ENCODE measurements at regions of chr7 and their contacts with region 1.

Region 1: DNA sequence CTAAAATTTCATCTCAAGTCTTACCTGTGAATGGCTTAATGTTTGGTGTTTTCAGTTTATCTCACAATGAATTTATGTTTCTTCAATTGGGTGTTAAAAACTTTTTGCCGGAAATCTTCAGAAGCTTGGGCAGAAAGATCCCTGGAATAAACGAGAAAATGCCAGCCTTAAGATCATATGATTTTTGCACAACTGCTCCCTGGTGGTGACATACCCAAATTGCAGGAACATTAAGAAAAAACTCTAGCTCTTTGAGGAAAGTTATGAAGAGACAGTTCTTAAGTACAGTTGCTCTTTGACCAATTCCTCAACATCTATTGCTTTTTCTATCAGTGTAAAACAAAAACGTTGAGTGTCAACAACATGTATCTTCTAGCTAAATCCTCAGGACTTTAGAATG is 48.2 kb upstream of the CREB5 start:
- DNase-seq: no peak
- ATAC-seq: no peak
- H3K4me3 Mint-ChIP-seq: no peak overlapping the region
- H3K27ac Mint-ChIP-seq: no peak overlapping the region
- H3K4me1 Mint-ChIP-seq: peaks cover 14% of the 10 kb centered on the region
- H3K27me3 Mint-ChIP-seq: no peaks in the 10 kb centered on the region
- CTCF ChIP-seq: 0 out of 2 replicates have a peak, but pooled peaks have one; percentile 30

Region 2: GRCh38 chr7:28296571-28297483 is 67.3 kb before region 1 on chr7:
- CTCF ChIA-PET with region 1: interaction called, 13 read pairs
- POLR2A ChIA-PET with region 1: no interaction called
- DNase-seq: peak; percentile 71
- ATAC-seq: peak; percentile 55
- H3K4me3 Mint-ChIP-seq: no peak overlapping the region
- H3K27ac Mint-ChIP-seq: 0 out of 2 replicates have a peak overlapping the region, but pooled peaks have one; percentile 30
- H3K4me1 Mint-ChIP-seq: peaks cover 61% of the 10 kb centered on the region
- H3K27me3 Mint-ChIP-seq: no peaks in the 10 kb centered on the region
- CTCF ChIP-seq: peak; percentile 25; the same call in 1 of the 2 replicates

Region 3: DNA sequence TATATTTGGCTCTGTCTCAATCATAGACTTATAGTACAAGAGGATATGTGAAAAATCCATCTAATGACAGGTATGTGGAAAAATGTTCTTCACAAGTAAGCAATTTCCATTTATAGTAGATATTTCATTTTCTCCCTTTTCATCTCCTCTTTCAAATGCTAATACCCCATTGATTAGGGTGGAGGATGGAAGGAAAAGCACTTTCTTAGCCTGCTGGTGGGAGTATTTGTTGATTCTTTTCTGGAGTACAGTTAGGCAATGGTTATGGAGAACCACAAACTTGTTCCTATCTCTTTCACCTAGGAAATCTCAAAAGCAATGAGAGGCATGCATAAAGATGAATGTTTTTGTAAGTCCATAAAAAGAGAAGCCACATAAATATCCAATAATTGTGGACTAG is 59.8 kb before region 1 on chr7:
- CTCF ChIA-PET with region 1: interaction called, 10 read pairs
- POLR2A ChIA-PET with region 1: no interaction called
- DNase-seq: no peak
- ATAC-seq: peak; percentile 43; the same call in 1 of the 2 replicates
- H3K4me3 Mint-ChIP-seq: no peak overlapping the region
- H3K27ac Mint-ChIP-seq: no peak overlapping the region
- H3K4me1 Mint-ChIP-seq: peaks cover 31% of the 10 kb centered on the region
- H3K27me3 Mint-ChIP-seq: no peaks in the 10 kb centered on the region; the same call in 1 of the 2 replicates
- CTCF ChIP-seq: no peak

Region 4: GRCh38 chr7:28338041-28338440 is 26.0 kb before region 1 on chr7:
- CTCF ChIA-PET with region 1: no interaction called
- POLR2A ChIA-PET with region 1: no interaction called
- DNase-seq: no peak
- ATAC-seq: no peak
- H3K4me3 Mint-ChIP-seq: no peak overlapping the region
- H3K27ac Mint-ChIP-seq: no peak overlapping the region
- H3K4me1 Mint-ChIP-seq: no peaks in the 10 kb centered on the region
- H3K27me3 Mint-ChIP-seq: no peaks in the 10 kb centered on the region
- CTCF ChIP-seq: no peak

Region 5: DNA sequence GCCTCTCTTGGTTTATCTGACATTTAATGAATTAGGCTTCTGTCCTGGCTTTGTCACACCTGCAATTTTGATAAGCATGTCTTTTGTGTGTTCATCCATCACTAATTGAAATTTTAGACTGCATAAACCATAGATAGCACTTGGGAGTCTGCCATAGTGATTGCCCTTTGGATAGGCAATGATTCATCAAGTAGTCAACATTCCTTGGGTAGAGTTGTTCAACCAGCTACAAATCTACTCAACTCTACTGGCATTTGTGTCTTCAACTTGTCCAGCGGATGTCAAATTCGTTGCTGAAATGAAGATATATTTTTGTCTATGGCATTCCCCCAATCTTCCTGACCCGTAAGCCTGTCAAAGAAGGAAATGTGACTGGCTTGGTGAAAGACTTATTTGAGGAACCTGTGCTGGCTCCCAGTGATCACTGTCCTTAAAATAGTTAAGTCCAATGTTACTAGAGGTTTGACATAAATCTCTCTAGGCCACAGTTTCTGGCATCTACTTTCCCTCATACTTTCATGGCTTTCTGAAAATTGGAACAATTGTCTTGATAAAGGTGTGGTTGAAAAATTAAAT is 14.6 kb after region 1 on chr7:
- CTCF ChIA-PET with region 1: no interaction called
- POLR2A ChIA-PET with region 1: no interaction called
- DNase-seq: no peak
- ATAC-seq: no peak
- H3K4me3 Mint-ChIP-seq: no peak overlapping the region
- H3K27ac Mint-ChIP-seq: no peak overlapping the region
- H3K4me1 Mint-ChIP-seq: peaks cover 4% of the 10 kb centered on the region
- H3K27me3 Mint-ChIP-seq: no peaks in the 10 kb centered on the region
- CTCF ChIP-seq: no peak